Pancreas (tissue), 10 donors: ENCODE measurements at regions of chr18 and their contacts with region 1.

Region 1: GRCh38 chr18:59070181-59070912 is 69.3 kb upstream of the SEC11C start:
- DNase-seq: peak; percentile 67 to 90 (median 81)
- ATAC-seq: peak; percentile 81 to 97 (median 93)
- H3K4me3 ChIP-seq: no peak overlapping the region
- H3K27ac ChIP-seq: no peak overlapping the region
- H3K4me1 ChIP-seq: no peaks in the 10 kb centered on the region
- H3K27me3 ChIP-seq: no peaks in the 10 kb centered on the region
- CTCF ChIP-seq: peak; percentile 69 to 85 (median 78)

Region 2: DNA sequence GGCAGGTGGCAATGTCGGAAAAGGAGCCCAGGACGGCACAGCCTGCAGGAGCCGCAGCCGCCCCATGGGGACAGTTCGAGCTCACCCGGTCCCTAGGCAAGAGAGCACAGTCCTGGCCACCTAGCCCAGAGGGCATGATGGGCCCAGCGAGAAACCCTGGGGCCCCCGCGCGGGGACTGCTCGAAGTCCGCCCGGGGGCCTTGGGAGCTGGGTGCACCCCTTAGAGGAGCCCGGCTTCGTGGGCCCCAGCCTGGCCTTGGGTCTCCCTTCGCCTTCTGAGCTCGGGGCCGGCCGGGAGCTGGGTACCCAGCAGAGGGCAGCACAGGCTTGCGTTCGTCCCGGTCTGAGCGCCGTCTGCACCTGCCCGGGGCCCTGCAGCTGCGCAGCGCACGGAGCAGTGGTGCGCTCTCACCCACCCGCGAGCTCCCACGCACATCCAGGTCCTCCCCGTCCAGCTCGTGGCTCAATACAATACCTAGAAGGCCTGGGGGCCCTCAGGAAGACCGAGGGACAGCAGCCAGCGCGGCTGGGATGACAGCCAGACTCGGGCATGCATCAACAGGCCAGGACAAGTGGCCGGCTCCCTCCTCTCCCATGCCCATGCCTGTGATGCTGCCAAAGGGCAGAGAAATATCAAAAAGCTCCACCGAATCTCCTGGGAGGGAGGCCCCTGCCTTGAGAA is 301.9 kb before region 1 on chr18:
- intact Hi-C with region 1: no loop called
- DNase-seq: peak; percentile 57 to 92 (median 77)
- ATAC-seq: peak; percentile 91 to 96 (median 96)
- H3K4me3 ChIP-seq: peak overlapping the region in 2 of 4 donors; percentile 17 to 18
- H3K27ac ChIP-seq: no peak overlapping the region
- H3K4me1 ChIP-seq: peaks cover 0 to 2% (median 0%) of the 10 kb centered on the region in 3 donors
- H3K27me3 ChIP-seq: peaks cover 0 to 5% (median 0%) of the 10 kb centered on the region in 4 donors
- CTCF ChIP-seq: peak; percentile 63 to 84 (median 68)

Region 3: GRCh38 chr18:58781627-58782194 is 288.6 kb before region 1 on chr18:
- intact Hi-C with region 1: loop called in 2 of 3 experiments (anchors 2 to 5 kb)
- DNase-seq: peak; percentile 43 to 77 (median 64)
- ATAC-seq: peak; percentile 76 to 90 (median 87)
- H3K4me3 ChIP-seq: no peak overlapping the region
- H3K27ac ChIP-seq: no peak overlapping the region
- H3K4me1 ChIP-seq: peaks cover 0 to 3% (median 0%) of the 10 kb centered on the region in 3 donors
- H3K27me3 ChIP-seq: no peaks in the 10 kb centered on the region
- CTCF ChIP-seq: peak; percentile 71 to 90 (median 82)

Region 4: GRCh38 chr18:59885579-59886163 is 815.3 kb after region 1 on chr18:
- intact Hi-C with region 1: no loop called
- DNase-seq: no peak
- ATAC-seq: peak in 1 of 4 donors; percentile 48
- H3K4me3 ChIP-seq: no peak overlapping the region
- H3K27ac ChIP-seq: no peak overlapping the region
- H3K4me1 ChIP-seq: peaks cover 0 to 9% (median 0%) of the 10 kb centered on the region in 3 donors
- H3K27me3 ChIP-seq: no peaks in the 10 kb centered on the region
- CTCF ChIP-seq: no peak

Region 5: GRCh38 chr18:60070631-60071030 is 1000.3 kb after region 1 on chr18:
- intact Hi-C with region 1: no loop called
- DNase-seq: no peak
- ATAC-seq: no peak
- H3K4me3 ChIP-seq: no peak overlapping the region
- H3K27ac ChIP-seq: no peak overlapping the region
- H3K4me1 ChIP-seq: no peaks in the 10 kb centered on the region
- H3K27me3 ChIP-seq: no peaks in the 10 kb centered on the region
- CTCF ChIP-seq: no peak